ENCODE measurements at regions of chr10 and their contacts with region 1.

Region 1: DNA sequence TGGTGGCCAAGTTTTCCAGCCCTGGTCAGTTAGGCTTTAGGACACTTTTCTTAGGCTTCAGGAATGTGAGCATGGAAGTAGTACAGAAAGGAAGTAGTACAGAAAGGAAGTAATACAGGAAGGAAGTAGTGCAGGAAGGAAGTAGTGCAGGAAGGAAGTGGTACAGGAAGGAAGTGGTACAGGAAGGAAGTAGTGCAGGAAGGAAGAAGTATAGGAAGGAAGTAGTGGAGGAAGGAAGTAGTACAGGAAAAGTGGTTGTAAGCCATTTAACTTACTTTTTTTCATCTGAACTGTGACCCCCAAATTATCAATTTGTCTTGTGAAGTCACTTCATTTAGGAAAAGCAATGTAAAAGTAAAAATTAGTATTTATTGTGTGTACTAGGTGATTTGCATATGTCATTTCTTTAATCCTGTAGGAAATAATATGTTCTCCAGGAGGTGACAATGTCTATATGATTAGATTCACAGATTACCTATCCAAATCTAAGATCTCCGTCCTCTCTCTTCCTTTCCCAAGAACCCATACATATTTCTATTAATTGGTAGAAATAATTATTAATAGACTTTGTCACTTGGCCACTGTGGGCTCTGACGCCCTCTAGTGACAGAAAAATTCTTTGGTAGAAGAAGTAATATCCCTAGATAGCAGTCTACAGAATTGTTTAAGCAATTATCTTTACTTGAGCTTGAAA is 3.9 kb upstream of the FAS start:
- DNase-seq: no peak

Region 2: DNA sequence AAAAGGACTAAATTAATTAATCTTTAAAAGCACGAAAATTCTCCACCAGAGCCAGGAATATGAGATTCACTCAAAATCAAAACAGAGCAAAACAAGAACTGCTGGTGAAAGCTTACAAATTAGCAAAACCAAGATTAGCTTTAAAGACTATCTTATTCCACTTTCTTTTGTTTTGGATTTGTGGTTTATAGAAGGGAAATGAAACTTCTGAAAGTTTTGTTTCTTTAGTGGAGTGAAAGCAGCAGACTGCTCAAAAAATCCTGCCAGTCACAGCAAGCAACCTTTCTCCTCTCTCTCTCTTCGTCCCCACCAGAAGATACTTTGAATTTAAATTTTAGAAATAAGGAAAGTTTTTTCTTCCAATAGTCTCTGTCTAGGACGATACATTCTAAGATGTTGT is 41.9 kb before region 1 on chr10:
- intact Hi-C with region 1: loop called (anchors 2 to 5 kb)
- DNase-seq: no peak